Right cardiac atrium (tissue), 5 donors: ENCODE measurements at regions of chr13 and their contacts with region 1.

Region 1: GRCh38 chr13:102580552-102581169 is 16.1 kb upstream of the TPP2 start:
- DNase-seq: no peak
- ATAC-seq: peak; percentile 56 to 61
- H3K4me3 ChIP-seq: no peak overlapping the region
- H3K27ac ChIP-seq: no peak overlapping the region
- H3K4me1 ChIP-seq: no peaks in the 10 kb centered on the region
- H3K27me3 ChIP-seq: no peaks in the 10 kb centered on the region

Region 2: DNA sequence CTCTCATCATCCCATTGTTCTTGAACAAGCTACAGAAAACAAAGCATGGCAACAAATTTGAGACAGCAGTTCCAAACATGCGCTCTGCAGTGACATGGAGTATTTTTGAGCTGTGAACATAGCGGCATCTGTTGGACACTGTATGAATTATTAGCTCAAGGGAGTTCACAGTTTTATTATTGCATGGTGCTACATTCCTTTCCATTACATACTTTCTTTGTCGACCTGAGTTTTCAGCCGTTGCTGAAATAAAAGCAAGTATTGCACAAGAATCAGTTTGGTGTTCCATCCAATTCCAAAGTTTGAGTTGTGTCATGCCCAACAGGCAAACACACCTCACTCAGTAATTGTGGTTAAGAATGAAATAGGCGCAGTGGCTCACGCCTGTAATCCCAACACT is 144.3 kb after region 1 on chr13:
- intact Hi-C with region 1: loop called in 1 of 4 experiments (anchors 10 kb)
- DNase-seq: no peak
- ATAC-seq: peak; percentile 53 to 74
- H3K4me3 ChIP-seq: no peak overlapping the region
- H3K27ac ChIP-seq: no peak overlapping the region
- H3K4me1 ChIP-seq: no peaks in the 10 kb centered on the region
- H3K27me3 ChIP-seq: no peaks in the 10 kb centered on the region